ENCODE measurements at regions of chr4 and their contacts with region 1.

Region 1: GRCh38 chr4:16001484-16001858 is 38.5 kb upstream of the FGFBP2 start:
- DNase-seq: peak; percentile 49
- H3K4me3 ChIP-seq: no peak overlapping the region
- H3K27ac ChIP-seq: no peak overlapping the region
- H3K4me1 ChIP-seq: no peaks in the 10 kb centered on the region
- H3K27me3 ChIP-seq: no peaks in the 10 kb centered on the region
- CTCF ChIP-seq: peak; percentile 69

Region 2: DNA sequence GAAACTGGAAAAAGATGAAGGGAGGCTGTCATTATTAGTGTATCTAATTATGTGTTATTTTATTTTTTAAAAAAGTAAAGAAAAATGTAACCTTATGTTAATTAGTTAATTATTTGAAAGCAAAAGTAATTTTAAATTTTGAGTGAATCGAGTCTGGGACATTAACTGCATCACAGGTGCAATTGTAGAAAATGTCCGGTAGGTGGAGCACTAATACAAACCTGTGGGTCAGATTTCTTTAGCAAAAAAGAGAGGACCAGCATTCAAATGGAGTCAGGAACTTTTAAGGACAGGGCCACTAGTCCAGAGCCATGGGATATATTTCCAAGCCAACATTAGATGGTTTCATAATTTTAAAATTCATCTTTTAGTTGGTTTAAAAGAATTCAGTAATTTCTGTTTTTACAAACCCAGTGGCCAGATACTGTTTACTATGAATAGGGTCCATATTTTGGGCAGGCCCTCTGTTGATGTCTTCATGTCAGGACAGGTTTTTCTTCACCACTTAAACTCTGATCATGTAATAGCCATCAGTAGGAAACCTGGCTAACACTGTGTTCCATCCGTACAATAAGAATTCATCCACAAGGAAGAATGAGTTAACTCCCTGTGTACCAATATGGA is 271.4 kb before region 1 on chr4:
- intact Hi-C with region 1: loop called (anchors 10 kb)
- DNase-seq: peak; percentile 26
- H3K4me3 ChIP-seq: no peak overlapping the region
- H3K27ac ChIP-seq: no peak overlapping the region
- H3K4me1 ChIP-seq: no peaks in the 10 kb centered on the region
- H3K27me3 ChIP-seq: no peaks in the 10 kb centered on the region
- CTCF ChIP-seq: peak; percentile 95

Region 3: GRCh38 chr4:15805583-15806517 is 195.6 kb before region 1 on chr4:
- intact Hi-C with region 1: loop called (anchors 5 kb)
- DNase-seq: peak; percentile 51
- H3K4me3 ChIP-seq: no peak overlapping the region
- H3K27ac ChIP-seq: no peak overlapping the region
- H3K4me1 ChIP-seq: no peaks in the 10 kb centered on the region
- H3K27me3 ChIP-seq: no peaks in the 10 kb centered on the region
- CTCF ChIP-seq: peak; percentile 55

Region 4: GRCh38 chr4:15882675-15883086 is 118.8 kb before region 1 on chr4:
- intact Hi-C with region 1: loop called (anchors 2 kb)
- DNase-seq: peak; percentile 58
- H3K4me3 ChIP-seq: no peak overlapping the region
- H3K27ac ChIP-seq: no peak overlapping the region
- H3K4me1 ChIP-seq: no peaks in the 10 kb centered on the region
- H3K27me3 ChIP-seq: no peaks in the 10 kb centered on the region
- CTCF ChIP-seq: peak; percentile 93

Region 5: GRCh38 chr4:15963001-15963451 is 38.4 kb before region 1 on chr4 and contains the start of gene FGFBP2:
- intact Hi-C with region 1: loop called (anchors 5 kb)
- DNase-seq: peak; percentile 66
- H3K4me3 ChIP-seq: no peak within 1 kb of the TSS
- H3K27ac ChIP-seq: no peak within 1 kb of the TSS
- H3K4me1 ChIP-seq: no peaks in the 10 kb centered on the region
- H3K27me3 ChIP-seq: no peaks in the 10 kb centered on the region
- CTCF ChIP-seq: peak; percentile 28
- total RNA-seq, gene FGFBP2: 0.37 to 0.96 TPM

Measured in colonic mucosa (tissue), 4 donors.